Mammary epithelial cell (primary cell): ENCODE measurements at regions of chr6 and their contacts with region 1.

Region 1: DNA sequence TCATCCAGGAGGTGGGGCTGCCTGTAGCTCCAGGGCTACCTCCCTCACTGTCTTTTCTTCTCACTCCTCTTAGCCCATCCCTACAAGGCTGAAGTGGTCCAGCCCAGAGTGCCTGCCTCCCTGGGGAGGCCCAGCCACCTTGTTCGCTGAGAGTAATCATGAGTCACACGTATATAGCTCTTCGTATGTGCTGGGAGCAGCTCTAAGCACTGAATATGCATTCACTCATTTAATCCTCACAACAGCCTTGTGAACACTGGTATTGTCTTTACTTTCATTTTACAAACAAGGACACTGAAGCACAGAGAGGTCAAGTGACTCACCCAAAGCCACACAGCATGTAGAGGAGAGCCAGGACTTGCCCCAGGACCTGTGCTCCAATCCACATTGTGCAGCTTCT is 14.7 kb upstream of the CCDC167 start:
- DNase-seq: peak; percentile 75
- H3K4me3 ChIP-seq: no peak overlapping the region
- H3K27ac ChIP-seq: no peak overlapping the region
- H3K4me1 ChIP-seq: peaks cover 26% of the 10 kb centered on the region
- H3K27me3 ChIP-seq: no peaks in the 10 kb centered on the region
- CTCF ChIP-seq: no peak

Region 2: GRCh38 chr6:37456816-37457560 is 57.4 kb before region 1 on chr6:
- CTCF ChIA-PET with region 1: no interaction called
- dilution Hi-C with region 1: no loop called
- in situ Hi-C with region 1: no loop called
- intact Hi-C with region 1: no loop called
- DNase-seq: no peak
- H3K4me3 ChIP-seq: no peak overlapping the region
- H3K27ac ChIP-seq: peak overlapping the region; percentile 30
- H3K4me1 ChIP-seq: peaks cover 11% of the 10 kb centered on the region
- H3K27me3 ChIP-seq: no peaks in the 10 kb centered on the region
- CTCF ChIP-seq: no peak

Region 3: DNA sequence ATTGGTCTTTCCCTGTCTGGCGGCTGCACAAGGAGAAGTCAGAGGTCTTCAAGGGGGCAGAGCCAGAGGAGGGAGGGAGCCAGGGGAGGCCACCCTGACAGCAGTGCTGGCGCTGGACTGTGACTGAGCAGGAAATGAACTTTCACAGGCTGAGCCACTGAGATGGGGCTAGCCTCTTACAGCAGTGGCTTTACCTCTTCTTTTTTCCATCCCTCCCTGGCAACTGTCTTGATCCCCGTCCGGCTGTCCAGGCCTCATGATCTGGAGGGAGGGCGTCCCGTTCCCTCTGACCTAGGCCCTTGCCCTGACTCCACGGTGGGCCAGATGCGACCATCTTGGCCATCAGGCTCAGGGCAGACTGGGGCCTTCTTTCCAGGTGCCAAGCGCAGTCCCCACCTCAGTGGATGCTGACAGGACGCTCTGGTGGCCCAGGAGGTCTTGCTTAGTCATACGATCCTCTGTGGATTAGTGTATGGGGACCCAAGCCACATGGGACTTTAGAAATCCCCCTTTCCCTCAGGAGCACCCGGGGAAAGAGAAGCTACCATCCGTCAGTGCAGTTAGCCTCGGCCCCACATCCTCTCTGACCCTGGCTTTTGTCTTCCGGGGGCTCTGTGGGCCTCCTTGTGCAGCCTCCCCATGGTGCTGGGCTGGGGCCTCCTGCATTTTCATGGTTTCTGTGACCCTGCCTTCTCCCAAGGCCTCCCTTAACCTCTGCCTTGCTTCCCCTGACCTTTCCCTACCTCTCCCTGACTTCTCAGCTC is 42.7 kb after region 1 on chr6:
- CTCF ChIA-PET with region 1: interaction called, 11 read pairs
- dilution Hi-C with region 1: no loop called
- in situ Hi-C with region 1: no loop called
- intact Hi-C with region 1: no loop called
- DNase-seq: no peak
- H3K4me3 ChIP-seq: no peak overlapping the region
- H3K27ac ChIP-seq: no peak overlapping the region
- H3K4me1 ChIP-seq: peaks cover 29% of the 10 kb centered on the region
- H3K27me3 ChIP-seq: no peaks in the 10 kb centered on the region
- CTCF ChIP-seq: no peak